ENCODE measurements at regions of chr7 and their contacts with region 1.

Region 1: GRCh38 chr7:92904292-92905131 is 68.1 kb upstream of the CDK6 start:
- DNase-seq: peak; percentile 81
- H3K4me3 Mint-ChIP-seq: peak overlapping the region; percentile 20
- H3K27ac Mint-ChIP-seq: peak overlapping the region; percentile 92
- H3K4me1 Mint-ChIP-seq: peaks cover 21% of the 10 kb centered on the region
- H3K27me3 Mint-ChIP-seq: no peaks in the 10 kb centered on the region

Region 2: GRCh38 chr7:92633211-92633906 is 271.2 kb before region 1 on chr7:
- intact Hi-C with region 1: loop called (anchors 1 kb)
- DNase-seq: no peak
- H3K4me3 Mint-ChIP-seq: peak overlapping the region; percentile 43
- H3K27ac Mint-ChIP-seq: peak overlapping the region; percentile 96
- H3K4me1 Mint-ChIP-seq: peaks cover 70% of the 10 kb centered on the region
- H3K27me3 Mint-ChIP-seq: no peaks in the 10 kb centered on the region

Region 3: GRCh38 chr7:92731335-92732063 is 173.0 kb before region 1 on chr7:
- intact Hi-C with region 1: loop called (anchors 1 kb)
- DNase-seq: no peak
- H3K4me3 Mint-ChIP-seq: peak overlapping the region; percentile 34
- H3K27ac Mint-ChIP-seq: peak overlapping the region; percentile 96
- H3K4me1 Mint-ChIP-seq: peaks cover 74% of the 10 kb centered on the region
- H3K27me3 Mint-ChIP-seq: no peaks in the 10 kb centered on the region

Region 4: DNA sequence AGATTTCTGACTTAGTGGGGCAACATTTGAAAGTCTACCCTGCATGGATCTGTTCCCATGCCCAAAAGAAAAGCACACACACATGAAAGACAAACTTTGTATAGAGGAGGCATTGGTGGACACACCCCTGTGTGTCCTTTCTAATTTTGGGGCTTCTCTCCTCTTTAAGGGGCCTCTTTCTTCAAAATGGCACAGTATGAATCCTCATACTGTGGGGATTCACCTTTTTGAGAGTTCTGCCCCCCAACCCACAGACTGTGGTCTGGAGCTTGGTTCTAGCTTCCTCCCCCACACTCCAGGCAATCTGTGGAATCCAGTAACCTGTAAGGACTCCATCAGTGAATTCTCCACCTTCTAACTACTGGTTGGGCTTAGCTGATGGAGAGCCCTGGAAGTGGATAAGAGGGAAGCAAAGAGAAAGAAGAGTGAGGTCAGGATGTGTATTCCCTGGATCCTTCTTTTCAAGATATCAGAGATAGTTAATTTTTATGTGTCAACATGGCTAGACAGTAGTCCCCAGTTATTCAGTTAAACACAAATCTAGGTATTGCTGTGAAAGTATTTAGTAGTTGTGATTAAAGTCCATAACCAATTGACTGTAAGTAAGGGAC is 35.7 kb before region 1 on chr7:
- intact Hi-C with region 1: loop called (anchors 1 kb)
- DNase-seq: no peak
- H3K4me3 Mint-ChIP-seq: no peak overlapping the region
- H3K27ac Mint-ChIP-seq: no peak overlapping the region
- H3K4me1 Mint-ChIP-seq: peaks cover 15% of the 10 kb centered on the region
- H3K27me3 Mint-ChIP-seq: no peaks in the 10 kb centered on the region

Region 5: GRCh38 chr7:92884218-92884617 is 20.3 kb before region 1 on chr7:
- intact Hi-C with region 1: no loop called
- DNase-seq: no peak
- H3K4me3 Mint-ChIP-seq: no peak overlapping the region
- H3K27ac Mint-ChIP-seq: no peak overlapping the region
- H3K4me1 Mint-ChIP-seq: peaks cover 19% of the 10 kb centered on the region
- H3K27me3 Mint-ChIP-seq: no peaks in the 10 kb centered on the region

Region 6: DNA sequence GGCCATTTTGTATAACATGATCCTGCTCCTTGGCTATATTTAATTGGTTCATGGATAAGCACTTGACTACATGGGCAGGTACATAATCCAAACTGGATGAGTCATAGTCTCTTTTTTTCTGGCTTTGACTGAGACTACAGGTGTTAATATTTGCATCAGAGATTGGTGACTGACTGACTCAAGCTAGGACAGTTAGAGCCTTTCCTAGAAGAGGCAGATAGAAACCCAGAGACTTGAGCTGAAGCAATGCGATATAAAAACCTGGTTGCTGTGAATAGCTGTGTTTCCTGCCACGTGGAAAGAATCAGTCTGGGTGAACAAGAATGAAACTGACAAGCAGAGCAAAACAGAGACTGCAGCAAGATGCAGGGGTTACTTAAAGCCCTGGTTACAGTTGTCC is 132.3 kb after region 1 on chr7:
- intact Hi-C with region 1: loop called (anchors 1 kb)
- DNase-seq: peak; percentile 33
- H3K4me3 Mint-ChIP-seq: no peak overlapping the region
- H3K27ac Mint-ChIP-seq: peak overlapping the region; percentile 39
- H3K4me1 Mint-ChIP-seq: peaks cover 16% of the 10 kb centered on the region
- H3K27me3 Mint-ChIP-seq: no peaks in the 10 kb centered on the region

Region 7: DNA sequence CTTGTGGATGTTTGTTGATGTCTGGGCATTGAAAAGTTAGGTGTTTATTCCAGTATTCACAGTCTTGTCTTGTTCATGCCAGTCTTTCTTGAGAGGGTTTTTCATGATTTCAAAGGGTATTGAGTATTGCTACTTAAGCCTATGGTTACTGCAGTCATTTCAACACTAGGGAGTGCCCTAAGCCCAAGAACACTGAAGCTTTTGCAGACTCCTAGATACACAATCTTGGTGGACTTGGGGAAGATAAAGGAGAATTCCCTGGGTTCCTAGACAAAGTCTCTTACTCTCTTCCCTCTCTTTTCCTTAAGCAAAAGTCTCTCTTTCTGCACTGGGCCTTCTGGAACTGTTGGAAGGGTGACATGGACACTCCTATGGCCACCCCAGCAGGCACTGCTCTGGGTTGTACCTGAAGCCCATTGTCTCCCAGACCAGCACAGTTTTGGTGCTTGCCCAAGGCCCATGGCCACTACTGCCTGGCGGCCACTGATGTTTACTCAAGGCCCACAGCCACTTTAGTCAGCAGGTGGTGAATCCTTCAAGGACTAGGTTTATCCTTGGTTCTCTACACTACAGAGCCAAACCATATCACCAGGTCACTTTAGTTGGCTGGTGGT is 188.4 kb after region 1 on chr7:
- intact Hi-C with region 1: no loop called
- DNase-seq: no peak
- H3K4me3 Mint-ChIP-seq: no peak overlapping the region
- H3K27ac Mint-ChIP-seq: no peak overlapping the region
- H3K4me1 Mint-ChIP-seq: no peaks in the 10 kb centered on the region
- H3K27me3 Mint-ChIP-seq: peaks cover 23% of the 10 kb centered on the region

Region 8: DNA sequence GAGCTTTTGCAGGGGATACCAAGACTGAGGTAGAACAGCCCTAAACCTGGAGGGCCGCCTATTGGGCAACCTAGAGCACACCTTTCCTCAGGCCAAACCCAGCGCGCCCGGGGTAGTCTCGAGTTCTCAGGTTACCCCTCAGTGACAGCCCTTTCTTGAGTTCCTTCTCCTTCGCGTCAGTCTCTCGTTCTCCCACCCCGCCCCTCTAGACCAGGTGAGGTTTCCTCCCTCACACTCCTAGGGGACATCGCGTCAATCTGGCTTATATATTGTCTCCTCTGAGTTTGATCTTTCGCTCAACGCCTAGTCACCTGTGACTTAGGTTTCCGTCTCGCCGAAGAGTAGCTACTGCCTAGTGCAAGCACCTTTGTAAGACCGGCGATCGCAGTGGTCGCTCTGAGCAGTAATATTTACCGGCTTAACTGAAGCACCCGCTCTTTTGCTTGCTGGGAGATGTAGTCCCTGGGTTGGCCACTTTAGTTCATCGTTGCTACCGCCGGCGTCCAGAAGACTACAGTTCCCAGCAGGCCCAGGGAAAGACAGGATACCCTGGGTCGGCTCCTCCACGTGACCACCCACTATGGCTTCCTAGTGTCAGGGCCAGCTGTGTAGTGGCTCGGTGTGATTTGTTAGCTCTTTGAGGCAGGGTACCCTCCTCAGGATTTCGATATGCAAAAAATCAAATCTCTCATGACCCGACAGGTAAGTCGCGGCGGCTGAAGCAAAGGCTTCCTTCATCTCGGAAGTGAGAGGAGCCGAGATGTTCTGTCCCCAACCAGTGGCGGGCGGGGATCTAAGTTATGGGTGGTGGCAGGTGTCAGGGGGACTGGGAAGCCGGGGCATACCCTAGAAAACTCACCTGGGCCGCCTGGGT is 327.5 kb after region 1 on chr7 and contains the start of gene VPS50:
- intact Hi-C with region 1: loop called (anchors 10 kb)
- DNase-seq: peak; percentile 89
- H3K4me3 Mint-ChIP-seq: peak within 1 kb of the TSS; percentile 96
- H3K27ac Mint-ChIP-seq: peak within 1 kb of the TSS; percentile 85
- H3K4me1 Mint-ChIP-seq: peaks cover 13% of the 10 kb centered on the region
- H3K27me3 Mint-ChIP-seq: peaks cover 4% of the 10 kb centered on the region
- total RNA-seq, gene VPS50: 14.8 and 15.6 TPM in 2 replicates